Esophagus squamous epithelium (tissue), 5 donors: ENCODE measurements at regions of chr9 and their contacts with region 1.

Region 1: DNA sequence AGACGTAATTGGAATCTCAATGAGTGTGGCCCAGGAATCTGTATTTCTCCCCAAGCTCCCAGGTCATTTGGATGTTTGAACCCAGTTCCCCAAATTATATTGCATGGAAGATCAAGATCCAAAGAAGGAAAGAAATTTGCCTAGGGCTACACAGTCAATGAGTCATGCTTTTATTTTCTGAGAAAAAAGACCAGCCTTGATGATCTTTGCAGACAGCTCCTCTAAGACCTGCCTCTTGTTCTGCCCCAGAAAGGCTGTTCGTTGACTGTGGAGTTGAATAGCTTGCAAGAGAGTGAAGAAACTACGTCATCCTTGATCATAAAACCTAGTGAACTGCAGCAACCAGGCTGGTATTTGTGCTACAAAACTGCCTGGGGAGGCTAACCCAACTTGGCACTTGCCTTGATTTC is 263.8 kb downstream of the PAPPA start:
- DNase-seq: no peak
- H3K4me3 ChIP-seq: no peak overlapping the region
- H3K27ac ChIP-seq: no peak overlapping the region
- H3K4me1 ChIP-seq: no peaks in the 10 kb centered on the region
- H3K27me3 ChIP-seq: no peaks in the 10 kb centered on the region
- CTCF ChIP-seq: no peak
- POLR2A ChIP-seq: no peak

Region 2: GRCh38 chr9:116355153-116355921 is 62.1 kb before region 1 on chr9:
- intact Hi-C with region 1: loop called (anchors 10 kb)
- DNase-seq: no peak
- H3K4me3 ChIP-seq: no peak overlapping the region
- H3K27ac ChIP-seq: peak overlapping the region in 3 of 4 donors; percentile 11 to 40 (median 17)
- H3K4me1 ChIP-seq: peaks cover 0 to 15% (median 0%) of the 10 kb centered on the region in 3 donors
- H3K27me3 ChIP-seq: no peaks in the 10 kb centered on the region
- CTCF ChIP-seq: no peak
- POLR2A ChIP-seq: no peak

Region 3: DNA sequence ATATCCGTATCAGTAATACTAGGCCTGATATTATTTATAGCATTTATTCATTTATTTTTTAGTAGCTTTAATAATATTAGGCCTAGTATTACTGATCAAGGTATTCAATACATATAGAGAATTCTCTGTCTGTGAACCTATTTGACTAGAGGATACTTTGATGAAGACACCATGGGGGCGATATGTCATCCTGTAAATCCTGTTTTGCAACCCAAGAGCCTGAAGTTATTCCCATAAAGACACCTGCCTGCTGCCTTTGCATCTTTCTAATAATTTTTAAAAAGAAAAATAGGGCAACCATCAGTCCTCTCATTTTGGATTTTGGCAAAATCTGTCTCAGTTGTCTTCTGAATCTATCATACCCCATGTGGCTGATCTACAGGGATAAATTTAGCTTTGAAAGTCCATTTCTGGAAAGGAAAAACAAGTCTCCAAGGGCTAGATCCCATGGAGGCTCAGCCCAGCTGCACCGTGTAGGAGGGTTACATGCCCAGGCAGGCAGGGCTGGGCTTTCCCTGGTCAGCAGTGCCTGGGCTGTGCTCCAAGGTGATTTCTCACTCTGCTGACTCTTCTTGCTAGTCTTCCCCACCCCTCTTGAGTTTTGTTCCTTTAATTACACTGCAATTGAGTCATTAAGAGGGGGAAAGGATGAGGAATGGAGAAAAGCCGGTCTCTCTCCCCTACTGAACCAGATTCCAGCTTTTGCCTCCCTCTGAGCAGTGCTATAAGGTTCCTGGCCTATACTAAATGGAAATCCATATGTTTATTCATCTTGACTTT is 438.7 kb after region 1 on chr9:
- intact Hi-C with region 1: no loop called
- DNase-seq: no peak
- H3K4me3 ChIP-seq: no peak overlapping the region
- H3K27ac ChIP-seq: peak overlapping the region; percentile 26 to 87 (median 79)
- H3K4me1 ChIP-seq: peaks cover 0 to 44% (median 13%) of the 10 kb centered on the region in 3 donors
- H3K27me3 ChIP-seq: no peaks in the 10 kb centered on the region
- CTCF ChIP-seq: no peak
- POLR2A ChIP-seq: no peak